ENCODE measurements at regions of chr6 and their contacts with region 1.

Region 1: GRCh38 chr6:142932889-142933288 is 12.1 kb downstream of the HIVEP2 start:
- DNase-seq: no peak
- ATAC-seq: no peak
- H3K4me3 ChIP-seq: no peak overlapping the region
- H3K27ac ChIP-seq: no peak overlapping the region
- H3K4me1 ChIP-seq: peaks cover 4 to 64% (median 38%) of the 10 kb centered on the region in 9 donors
- H3K27me3 ChIP-seq: no peaks in the 10 kb centered on the region
- CTCF ChIP-seq: no peak

Region 2: GRCh38 chr6:142722012-142722411 is 210.9 kb before region 1 on chr6:
- intact Hi-C with region 1: no loop called
- DNase-seq: no peak
- ATAC-seq: peak in 2 of 8 donors; percentile 11 to 31
- H3K4me3 ChIP-seq: no peak overlapping the region
- H3K27ac ChIP-seq: no peak overlapping the region
- H3K4me1 ChIP-seq: peaks cover 0 to 14% (median 0%) of the 10 kb centered on the region in 9 donors
- H3K27me3 ChIP-seq: no peaks in the 10 kb centered on the region
- CTCF ChIP-seq: no peak

Region 3: GRCh38 chr6:142898927-142899895 is 33.7 kb before region 1 on chr6:
- intact Hi-C with region 1: loop called in 1 of 10 experiments (anchors 5 kb)
- DNase-seq: no peak
- ATAC-seq: no peak
- H3K4me3 ChIP-seq: no peak overlapping the region
- H3K27ac ChIP-seq: no peak overlapping the region
- H3K4me1 ChIP-seq: peaks cover 0 to 50% (median 31%) of the 10 kb centered on the region in 9 donors
- H3K27me3 ChIP-seq: no peaks in the 10 kb centered on the region
- CTCF ChIP-seq: no peak

Region 4: DNA sequence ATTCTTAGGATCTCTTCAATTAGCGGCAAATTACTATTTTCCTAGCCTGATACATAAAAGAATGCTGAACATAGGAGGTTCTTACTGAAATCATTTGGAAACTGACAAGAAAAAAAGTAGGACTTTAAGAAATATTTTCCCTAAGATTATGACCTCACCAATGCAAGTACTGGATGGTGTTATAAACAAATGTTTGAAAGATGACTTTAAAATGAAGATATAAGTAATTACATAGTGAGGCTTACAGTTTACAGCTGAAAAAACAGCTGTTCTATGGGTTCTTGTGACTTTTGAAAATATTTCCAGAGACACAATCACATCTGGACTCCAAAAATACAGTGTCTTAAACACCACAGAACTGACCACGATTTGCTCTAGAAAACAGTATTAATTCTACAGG is 452.7 kb after region 1 on chr6:
- intact Hi-C with region 1: no loop called
- DNase-seq: no peak
- ATAC-seq: no peak
- H3K4me3 ChIP-seq: no peak overlapping the region
- H3K27ac ChIP-seq: no peak overlapping the region
- H3K4me1 ChIP-seq: no peaks in the 10 kb centered on the region
- H3K27me3 ChIP-seq: no peaks in the 10 kb centered on the region
- CTCF ChIP-seq: no peak

Region 5: GRCh38 chr6:143782481-143782880 is 849.6 kb after region 1 on chr6:
- intact Hi-C with region 1: no loop called
- DNase-seq: no peak
- ATAC-seq: peak in 1 of 8 donors; percentile 33
- H3K4me3 ChIP-seq: no peak overlapping the region
- H3K27ac ChIP-seq: peak overlapping the region in 2 of 10 donors; percentile 7 to 28
- H3K4me1 ChIP-seq: peaks cover 0 to 16% (median 6%) of the 10 kb centered on the region in 9 donors
- H3K27me3 ChIP-seq: no peaks in the 10 kb centered on the region
- CTCF ChIP-seq: no peak